Sciatic nerve (tissue), 2 donors: ENCODE measurements at regions of chrX and their contacts with region 1.

Region 1: DNA sequence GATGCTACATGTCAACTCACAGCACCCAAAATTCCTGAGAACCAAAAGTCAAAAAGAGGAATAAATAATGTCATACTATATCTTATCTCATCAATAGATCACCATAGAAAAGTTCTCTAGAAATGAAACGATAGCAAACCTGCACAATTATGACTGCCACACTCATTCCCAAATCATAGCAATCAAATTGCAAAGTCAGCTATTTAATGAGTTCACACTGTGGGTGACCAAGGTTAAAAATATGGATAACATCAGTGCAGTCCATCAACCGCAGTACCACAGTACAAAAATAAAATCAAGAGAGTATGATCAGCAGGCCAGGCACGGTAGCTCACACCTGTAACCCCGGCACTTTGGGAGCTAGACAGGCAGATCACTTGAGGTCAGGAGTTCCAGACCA is 62.3 kb downstream of the ATRX start:
- DNase-seq: no peak
- ATAC-seq: no peak

Region 2: GRCh38 chrX:77742788-77743476 is 19.2 kb after region 1 on chrX:
- intact Hi-C with region 1: loop called (anchors 1 kb)
- DNase-seq: no peak
- ATAC-seq: peak; percentile 22